Endothelial cell of umbilical vein (primary cell): ENCODE measurements at regions of chr15 and their contacts with region 1.

Region 1: GRCh38 chr15:69576035-69576526 is 123.5 kb downstream of the RPLP1 start:
- DNase-seq: peak; percentile 22
- H3K4me3 ChIP-seq: no peak overlapping the region
- H3K27ac ChIP-seq: no peak overlapping the region
- H3K4me1 ChIP-seq: peaks cover 4% of the 10 kb centered on the region
- H3K27me3 ChIP-seq: peaks cover 2 to 6% of the 10 kb centered on the region in 2 experiments
- CTCF ChIP-seq: peak; percentile 44 to 73
- POLR2A ChIP-seq: no peak

Region 2: GRCh38 chr15:69854521-69855181 is 278.6 kb after region 1 on chr15:
- CTCF ChIA-PET with region 1: no interaction called
- POLR2A ChIA-PET with region 1: interaction called, 14 read pairs
- dilution Hi-C with region 1: no loop called
- intact Hi-C with region 1: no loop called
- DNase-seq: peak; percentile 16
- H3K4me3 ChIP-seq: no peak overlapping the region
- H3K27ac ChIP-seq: no peak overlapping the region
- H3K4me1 ChIP-seq: no peaks in the 10 kb centered on the region
- H3K27me3 ChIP-seq: no peaks in the 10 kb centered on the region
- CTCF ChIP-seq: no peak
- POLR2A ChIP-seq: no peak

Region 3: DNA sequence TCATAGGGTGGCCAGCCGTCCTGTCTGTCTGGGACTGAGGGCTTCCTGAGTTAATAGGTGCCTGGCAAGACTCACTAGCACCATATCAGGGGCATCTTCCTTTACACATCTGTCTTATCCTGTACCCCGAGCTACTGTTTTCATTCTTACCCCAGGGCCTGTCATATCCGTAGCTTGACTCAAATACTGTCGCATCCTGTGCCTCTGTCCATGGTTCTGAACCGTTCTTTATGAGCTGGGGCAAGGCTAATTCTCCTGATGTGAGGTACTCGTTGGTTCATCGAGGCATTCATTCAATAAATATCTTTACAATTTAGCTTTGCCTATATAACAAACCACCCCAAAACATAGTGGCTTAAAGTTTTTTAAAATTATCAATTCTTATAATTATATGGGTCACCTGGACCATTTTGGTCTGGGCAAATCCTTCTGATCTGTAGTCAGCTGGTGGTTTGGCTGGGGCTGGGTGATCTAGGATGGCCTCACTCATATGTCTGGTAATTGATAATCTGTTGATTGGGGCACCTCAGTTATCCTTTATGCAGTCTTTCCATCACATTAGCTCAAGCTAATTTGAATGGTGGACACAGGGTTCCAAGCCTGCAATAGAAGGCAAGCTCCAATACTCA is 400.4 kb after region 1 on chr15:
- CTCF ChIA-PET with region 1: no interaction called
- POLR2A ChIA-PET with region 1: no interaction called
- dilution Hi-C with region 1: no loop called
- intact Hi-C with region 1: no loop called
- DNase-seq: peak; percentile 40
- H3K4me3 ChIP-seq: no peak overlapping the region
- H3K27ac ChIP-seq: no peak overlapping the region
- H3K4me1 ChIP-seq: no peaks in the 10 kb centered on the region
- H3K27me3 ChIP-seq: no peaks in the 10 kb centered on the region
- CTCF ChIP-seq: no peak
- POLR2A ChIP-seq: no peak

Region 4: DNA sequence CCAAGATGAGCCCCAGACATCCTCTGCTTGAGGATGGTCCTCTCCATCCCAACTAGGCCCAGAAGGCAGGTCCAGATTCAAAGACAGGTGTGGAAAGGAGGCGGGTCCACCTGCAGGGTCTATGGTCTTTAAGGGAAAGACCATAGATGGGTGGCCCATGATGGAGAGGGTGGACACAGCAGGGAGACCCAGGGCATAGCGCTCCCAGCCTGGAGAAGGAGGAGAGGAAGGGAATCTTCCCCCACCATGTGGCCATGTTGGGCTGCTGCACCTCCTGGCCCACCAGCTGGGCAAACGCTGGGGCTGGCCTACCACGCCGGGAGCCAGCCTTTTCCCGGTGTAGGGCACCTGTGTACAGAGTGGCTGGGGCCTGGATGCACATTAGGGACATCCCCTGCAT is 786.8 kb after region 1 on chr15:
- CTCF ChIA-PET with region 1: no interaction called
- POLR2A ChIA-PET with region 1: no interaction called
- dilution Hi-C with region 1: no loop called
- intact Hi-C with region 1: loop called (anchors 5 kb)
- DNase-seq: peak; percentile 38
- H3K4me3 ChIP-seq: no peak overlapping the region
- H3K27ac ChIP-seq: no peak overlapping the region
- H3K4me1 ChIP-seq: no peaks in the 10 kb centered on the region
- H3K27me3 ChIP-seq: no peaks in the 10 kb centered on the region
- CTCF ChIP-seq: peak; percentile 55 to 87
- POLR2A ChIP-seq: no peak

Region 5: DNA sequence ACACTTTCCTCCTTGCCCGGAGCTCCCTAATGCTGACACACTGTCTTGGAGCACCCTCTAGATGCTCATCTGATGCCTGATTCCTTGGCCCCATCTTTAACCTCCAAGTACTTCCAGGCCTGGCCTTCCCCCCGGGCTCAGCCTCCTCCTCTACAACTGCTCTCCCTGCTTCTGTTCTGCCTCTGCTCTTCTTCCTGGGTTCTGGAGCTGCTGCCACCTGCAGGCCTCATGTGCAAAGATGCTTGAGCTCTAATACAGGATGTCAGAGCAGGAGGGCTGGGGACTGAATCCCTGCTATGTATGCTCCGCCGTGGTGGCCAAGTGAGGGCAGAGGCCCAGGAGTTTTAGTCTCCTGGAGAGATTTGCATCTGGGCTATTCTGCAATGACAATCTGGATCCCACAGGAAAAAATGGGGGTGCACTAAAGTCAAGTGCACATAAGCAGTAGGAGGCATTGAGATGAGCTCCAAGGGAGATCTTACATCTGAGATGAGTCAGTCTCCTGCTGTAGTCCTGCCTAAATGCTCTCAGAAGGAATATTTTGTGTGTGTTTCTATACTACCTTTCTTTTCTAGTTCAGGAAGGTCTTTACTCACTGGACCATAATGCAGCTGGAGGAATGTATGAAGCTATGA is 890.9 kb after region 1 on chr15:
- CTCF ChIA-PET with region 1: interaction called, 8 read pairs
- POLR2A ChIA-PET with region 1: no interaction called
- dilution Hi-C with region 1: no loop called
- intact Hi-C with region 1: loop called (anchors 5 kb)
- DNase-seq: peak; percentile 38
- H3K4me3 ChIP-seq: no peak overlapping the region
- H3K27ac ChIP-seq: no peak overlapping the region
- H3K4me1 ChIP-seq: no peaks in the 10 kb centered on the region
- H3K27me3 ChIP-seq: peaks cover 3 to 6% of the 10 kb centered on the region in 2 experiments
- CTCF ChIP-seq: peak; percentile 46 to 70
- POLR2A ChIP-seq: no peak